ENCODE measurements at regions of chrX and their contacts with region 1.

Region 1: DNA sequence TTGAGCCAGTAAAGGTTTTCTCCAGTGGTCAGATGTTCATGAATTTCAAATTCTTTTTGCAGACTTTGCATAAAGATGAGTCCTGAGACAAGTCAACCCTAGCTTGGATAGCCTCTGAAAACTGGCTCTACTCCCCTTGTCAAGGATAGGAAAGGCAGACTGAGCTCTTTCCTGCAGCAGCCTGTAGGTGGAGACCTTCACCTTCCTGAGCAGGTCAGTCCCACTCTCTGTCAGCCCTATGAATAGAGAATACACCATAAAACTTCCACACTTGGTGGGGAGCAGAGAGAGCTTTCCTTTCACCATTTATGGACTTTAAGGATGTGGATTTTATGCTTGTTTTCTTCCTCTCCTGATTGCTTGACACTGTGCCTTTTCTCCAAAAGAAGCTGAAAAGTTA is 41.9 kb downstream of the PCDH19 start:
- DNase-seq: peak; percentile 18
- H3K4me3 Mint-ChIP-seq: no peak overlapping the region
- H3K27ac Mint-ChIP-seq: no peak overlapping the region
- H3K4me1 Mint-ChIP-seq: no peaks in the 10 kb centered on the region
- H3K27me3 Mint-ChIP-seq: no peaks in the 10 kb centered on the region
- CTCF ChIP-seq: no peak

Region 2: GRCh38 chrX:100413229-100413628 is 45.1 kb after region 1 on chrX:
- CTCF ChIA-PET with region 1: interaction called, 21 read pairs
- intact Hi-C with region 1: loop called (anchors 2 kb)
- DNase-seq: peak; percentile 38
- H3K4me3 Mint-ChIP-seq: no peak overlapping the region
- H3K27ac Mint-ChIP-seq: no peak overlapping the region
- H3K4me1 Mint-ChIP-seq: no peaks in the 10 kb centered on the region
- H3K27me3 Mint-ChIP-seq: peaks cover 39% of the 10 kb centered on the region
- CTCF ChIP-seq: peak; percentile 24